PC-3 (cell line): ENCODE measurements at regions of chr21 and their contacts with region 1.

Region 1: DNA sequence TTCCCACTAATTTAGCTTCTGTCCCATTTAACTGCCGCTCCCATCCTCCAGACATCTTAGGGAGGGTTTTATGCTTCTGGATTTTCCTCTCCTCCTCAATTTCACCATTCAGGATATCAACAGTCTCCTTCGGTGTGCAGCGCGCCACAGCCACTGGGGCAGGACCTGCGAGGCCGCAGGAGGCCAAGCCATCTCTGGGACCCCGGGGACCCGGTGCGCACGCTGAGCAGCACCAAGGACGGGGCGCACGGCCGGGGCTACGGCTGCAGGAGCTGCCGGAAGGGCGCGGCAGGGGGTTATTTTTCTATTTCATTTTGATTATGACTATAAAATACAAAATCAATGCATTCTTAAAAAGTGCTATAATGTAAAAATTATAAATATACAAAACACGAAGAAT is 1238.4 kb upstream of the NCAM2 start:
- DNase-seq: no peak
- ATAC-seq: no peak
- H3K4me3 ChIP-seq: no peak overlapping the region
- H3K27ac ChIP-seq: no peak overlapping the region
- H3K4me1 ChIP-seq: no peaks in the 10 kb centered on the region
- H3K27me3 ChIP-seq: no peaks in the 10 kb centered on the region
- CTCF ChIP-seq: no peak

Region 2: GRCh38 chr21:19590044-19590443 is 169.8 kb before region 1 on chr21:
- CTCF ChIA-PET with region 1: no interaction called
- POLR2A ChIA-PET with region 1: no interaction called
- intact Hi-C with region 1: no loop called
- DNase-seq: no peak
- ATAC-seq: no peak
- H3K4me3 ChIP-seq: no peak overlapping the region
- H3K27ac ChIP-seq: no peak overlapping the region
- H3K4me1 ChIP-seq: no peaks in the 10 kb centered on the region
- H3K27me3 ChIP-seq: no peaks in the 10 kb centered on the region
- CTCF ChIP-seq: no peak

Region 3: GRCh38 chr21:19704832-19705231 is 55.0 kb before region 1 on chr21:
- CTCF ChIA-PET with region 1: no interaction called
- POLR2A ChIA-PET with region 1: no interaction called
- intact Hi-C with region 1: loop called (anchors 2 kb)
- DNase-seq: no peak
- ATAC-seq: no peak
- H3K4me3 ChIP-seq: no peak overlapping the region
- H3K27ac ChIP-seq: no peak overlapping the region
- H3K4me1 ChIP-seq: no peaks in the 10 kb centered on the region
- H3K27me3 ChIP-seq: no peaks in the 10 kb centered on the region
- CTCF ChIP-seq: no peak